ENCODE measurements at regions of chr4 and their contacts with region 1.

Region 1: GRCh38 chr4:150242820-150243458 is 164.7 kb downstream of the DCLK2 start:
- DNase-seq: no peak

Region 2: GRCh38 chr4:149999485-150000074 is 243.4 kb before region 1 on chr4:
- intact Hi-C with region 1: loop called (anchors 5 to 10 kb)
- DNase-seq: no peak